CD4-positive, alpha-beta T cell (primary cell): ENCODE measurements at regions of chr10 and their contacts with region 1.

Region 1: GRCh38 chr10:14904316-14904732 is 25.7 kb downstream of the SUV39H2 start:
- DNase-seq: peak in 6 of 14 experiments; percentile 5 to 58 (median 34)
- ATAC-seq: peak; percentile 80
- H3K4me3 ChIP-seq: no peak overlapping the region
- H3K4me3 Mint-ChIP-seq: no peak overlapping the region
- H3K27ac ChIP-seq: no peak overlapping the region
- H3K27ac Mint-ChIP-seq: no peak overlapping the region
- H3K4me1 ChIP-seq: no peaks in the 10 kb centered on the region
- H3K4me1 Mint-ChIP-seq: peaks cover 32% of the 10 kb centered on the region
- H3K27me3 ChIP-seq: no peaks in the 10 kb centered on the region
- H3K27me3 Mint-ChIP-seq: no peaks in the 10 kb centered on the region
- CTCF ChIP-seq: peak; percentile 69

Region 2: GRCh38 chr10:14954001-14954770 is 49.9 kb after region 1 on chr10 and contains the start of gene DCLRE1C:
- CTCF ChIA-PET with region 1: no interaction called
- POLR2A ChIA-PET with region 1: interaction called, 5 read pairs
- intact Hi-C with region 1: loop called in 1 of 2 experiments (anchors 2 kb)
- DNase-seq: peak; percentile 71 to 93 (median 80)
- ATAC-seq: peak; percentile 86
- H3K4me3 ChIP-seq: peak within 1 kb of the TSS; percentile 86
- H3K4me3 Mint-ChIP-seq: peak within 1 kb of the TSS; percentile 91
- H3K27ac ChIP-seq: peak within 1 kb of the TSS; percentile 82 to 91
- H3K27ac Mint-ChIP-seq: peak within 1 kb of the TSS; percentile 90
- H3K4me1 ChIP-seq: peaks cover 61% of the 10 kb centered on the region
- H3K4me1 Mint-ChIP-seq: peaks cover 66% of the 10 kb centered on the region
- H3K27me3 ChIP-seq: no peaks in the 10 kb centered on the region
- H3K27me3 Mint-ChIP-seq: no peaks in the 10 kb centered on the region
- CTCF ChIP-seq: no peak
- total RNA-seq, gene DCLRE1C: 11.0 to 15.4 TPM

Region 3: DNA sequence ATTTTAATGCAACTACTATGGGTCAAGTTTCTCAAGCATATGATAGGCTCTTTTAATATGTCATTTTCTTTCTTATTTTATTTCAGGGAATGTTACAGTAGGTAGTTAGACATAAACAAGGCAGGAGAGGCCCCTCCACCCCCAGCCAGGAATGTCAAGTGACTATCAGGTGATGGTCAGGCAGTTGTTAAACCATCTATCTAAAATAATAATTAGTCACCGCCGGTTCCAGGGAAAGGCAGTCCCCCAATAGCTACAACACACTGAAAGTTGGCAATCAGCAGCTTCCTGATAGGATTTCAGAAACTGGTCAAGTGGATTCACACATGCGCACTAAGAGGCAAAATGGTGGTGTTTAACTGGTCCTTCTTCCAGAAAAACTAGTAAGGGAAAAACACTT is 148.7 kb after region 1 on chr10:
- CTCF ChIA-PET with region 1: no interaction called
- POLR2A ChIA-PET with region 1: no interaction called
- intact Hi-C with region 1: no loop called
- DNase-seq: no peak
- ATAC-seq: no peak
- H3K4me3 ChIP-seq: no peak overlapping the region
- H3K4me3 Mint-ChIP-seq: no peak overlapping the region
- H3K27ac ChIP-seq: no peak overlapping the region
- H3K27ac Mint-ChIP-seq: no peak overlapping the region
- H3K4me1 ChIP-seq: no peaks in the 10 kb centered on the region
- H3K4me1 Mint-ChIP-seq: no peaks in the 10 kb centered on the region
- H3K27me3 ChIP-seq: no peaks in the 10 kb centered on the region
- H3K27me3 Mint-ChIP-seq: no peaks in the 10 kb centered on the region
- CTCF ChIP-seq: no peak

Region 4: GRCh38 chr10:15182540-15183207 is 278.4 kb after region 1 on chr10:
- CTCF ChIA-PET with region 1: no interaction called
- POLR2A ChIA-PET with region 1: no interaction called
- intact Hi-C with region 1: no loop called
- DNase-seq: no peak
- ATAC-seq: no peak
- H3K4me3 ChIP-seq: no peak overlapping the region
- H3K4me3 Mint-ChIP-seq: no peak overlapping the region
- H3K27ac ChIP-seq: no peak overlapping the region
- H3K27ac Mint-ChIP-seq: no peak overlapping the region
- H3K4me1 ChIP-seq: peaks cover 33% of the 10 kb centered on the region
- H3K4me1 Mint-ChIP-seq: peaks cover 32% of the 10 kb centered on the region
- H3K27me3 ChIP-seq: no peaks in the 10 kb centered on the region
- H3K27me3 Mint-ChIP-seq: no peaks in the 10 kb centered on the region
- CTCF ChIP-seq: no peak

Region 5: GRCh38 chr10:15571575-15571974 is 667.3 kb after region 1 on chr10:
- CTCF ChIA-PET with region 1: no interaction called
- POLR2A ChIA-PET with region 1: no interaction called
- intact Hi-C with region 1: no loop called
- DNase-seq: no peak
- ATAC-seq: no peak
- H3K4me3 ChIP-seq: no peak overlapping the region
- H3K4me3 Mint-ChIP-seq: no peak overlapping the region
- H3K27ac ChIP-seq: no peak overlapping the region
- H3K27ac Mint-ChIP-seq: no peak overlapping the region
- H3K4me1 ChIP-seq: no peaks in the 10 kb centered on the region
- H3K4me1 Mint-ChIP-seq: no peaks in the 10 kb centered on the region
- H3K27me3 ChIP-seq: no peaks in the 10 kb centered on the region
- H3K27me3 Mint-ChIP-seq: peaks cover 20% of the 10 kb centered on the region
- CTCF ChIP-seq: no peak

Region 6: DNA sequence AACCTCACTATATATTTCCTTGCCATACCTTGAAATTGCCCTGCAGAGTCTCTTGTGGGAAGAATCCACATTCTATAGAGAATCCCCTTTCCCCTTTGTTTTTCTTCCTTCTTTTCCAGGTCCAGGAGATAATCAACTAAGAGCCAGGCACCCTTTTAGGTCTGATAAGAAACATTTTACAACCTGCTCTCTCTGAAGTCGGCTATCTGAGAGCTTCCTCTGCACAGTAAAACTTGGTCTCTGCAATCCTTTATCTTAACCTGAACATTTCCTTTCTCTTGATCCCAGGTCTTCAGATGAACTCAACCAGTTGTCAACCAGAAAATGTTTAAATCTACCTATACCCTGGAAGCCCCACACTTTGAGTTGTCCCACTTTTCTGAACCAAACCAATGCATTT is 1513.0 kb after region 1 on chr10:
- CTCF ChIA-PET with region 1: no interaction called
- POLR2A ChIA-PET with region 1: no interaction called
- intact Hi-C with region 1: no loop called
- DNase-seq: no peak
- ATAC-seq: no peak
- H3K4me3 ChIP-seq: no peak overlapping the region
- H3K4me3 Mint-ChIP-seq: no peak overlapping the region
- H3K27ac ChIP-seq: no peak overlapping the region
- H3K27ac Mint-ChIP-seq: no peak overlapping the region
- H3K4me1 ChIP-seq: no peaks in the 10 kb centered on the region
- H3K4me1 Mint-ChIP-seq: no peaks in the 10 kb centered on the region
- H3K27me3 ChIP-seq: peaks cover 2 to 8% of the 10 kb centered on the region in 2 experiments
- H3K27me3 Mint-ChIP-seq: peaks cover 36% of the 10 kb centered on the region
- CTCF ChIP-seq: no peak